Right lobe of liver (tissue), 6 donors: ENCODE measurements at regions of chr4 and their contacts with region 1.

Region 1: GRCh38 chr4:10018818-10019461 is 2.4 kb downstream of the SLC2A9 start:
- DNase-seq: peak; percentile 91 to 95 (median 94)
- ATAC-seq: peak; percentile 53 to 74 (median 61)
- H3K4me3 ChIP-seq: peak overlapping the region; percentile 0 to 29 (median 6)
- H3K27ac ChIP-seq: peak overlapping the region; percentile 80 to 86 (median 83)
- H3K4me1 ChIP-seq: peaks cover 2 to 55% (median 18%) of the 10 kb centered on the region in 4 donors
- H3K27me3 ChIP-seq: no peaks in the 10 kb centered on the region
- CTCF ChIP-seq: peak; percentile 69 to 79 (median 73)
- POLR2A ChIP-seq: peak; percentile 47

Region 2: GRCh38 chr4:9762823-9763475 is 256.0 kb before region 1 on chr4:
- intact Hi-C with region 1: loop called (anchors 5 to 10 kb)
- DNase-seq: peak in 1 of 3 donors; percentile 61
- ATAC-seq: peak in 3 of 4 donors; percentile 33 to 40 (median 34)
- H3K4me3 ChIP-seq: no peak overlapping the region
- H3K27ac ChIP-seq: no peak overlapping the region
- H3K4me1 ChIP-seq: no peaks in the 10 kb centered on the region
- H3K27me3 ChIP-seq: no peaks in the 10 kb centered on the region
- CTCF ChIP-seq: peak; percentile 48 to 65 (median 58)
- POLR2A ChIP-seq: no peak